Right ventricle myocardium superior (tissue), 1 donor: ENCODE measurements at regions of chr1 and their contacts with region 1.

Region 1: GRCh38 chr1:27044613-27045151 is 32.0 kb upstream of the TENT5B start:
- DNase-seq: peak; percentile 93
- ATAC-seq: peak; percentile 97

Region 2: GRCh38 chr1:26811057-26811456 is 233.6 kb before region 1 on chr1:
- intact Hi-C with region 1: no loop called
- DNase-seq: no peak
- ATAC-seq: no peak

Region 3: GRCh38 chr1:27097484-27097917 is 52.8 kb after region 1 on chr1:
- intact Hi-C with region 1: loop called (anchors 2 kb)
- DNase-seq: peak; percentile 85
- ATAC-seq: peak; percentile 71

Region 4: GRCh38 chr1:27284425-27285273 is 240.0 kb after region 1 on chr1:
- intact Hi-C with region 1: loop called (anchors 10 kb)
- DNase-seq: peak; percentile 90
- ATAC-seq: peak; percentile 89

Region 5: DNA sequence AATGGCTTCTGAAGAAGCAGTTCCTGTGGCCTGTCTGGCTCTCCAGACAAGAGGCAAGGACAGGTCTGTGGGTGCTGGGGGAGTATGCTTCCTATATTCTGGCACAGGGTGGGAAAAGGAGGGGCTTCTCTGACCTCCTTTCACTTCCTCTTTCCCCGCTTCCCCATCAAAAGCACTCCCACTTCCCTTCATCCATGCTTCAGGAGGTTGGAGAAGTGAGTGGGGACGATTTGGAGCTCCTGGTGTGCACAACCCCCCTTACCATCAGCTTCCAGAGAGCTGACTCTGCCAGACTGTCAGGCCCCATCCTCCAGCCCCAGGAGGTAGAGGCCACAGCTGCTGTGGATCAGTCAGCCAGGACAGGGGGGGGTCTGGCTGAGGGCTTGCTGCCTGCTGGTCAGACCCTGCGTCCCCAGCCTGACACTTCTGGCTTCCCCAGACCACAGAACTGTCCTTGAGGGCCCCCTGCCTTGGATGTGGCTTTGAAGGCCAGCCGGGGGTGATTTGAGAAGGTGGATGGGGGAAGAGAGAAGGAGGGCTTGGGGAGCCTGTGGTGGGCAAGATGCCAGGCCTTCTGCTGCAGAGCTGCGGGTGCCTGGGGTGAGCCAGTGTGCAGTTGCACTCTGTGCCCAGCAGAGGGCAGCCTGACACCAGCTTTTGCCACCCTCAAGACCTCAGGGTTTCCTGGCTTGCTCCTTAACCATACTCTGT is 255.8 kb after region 1 on chr1:
- intact Hi-C with region 1: no loop called
- DNase-seq: peak; percentile 91
- ATAC-seq: peak; percentile 86

Region 6: DNA sequence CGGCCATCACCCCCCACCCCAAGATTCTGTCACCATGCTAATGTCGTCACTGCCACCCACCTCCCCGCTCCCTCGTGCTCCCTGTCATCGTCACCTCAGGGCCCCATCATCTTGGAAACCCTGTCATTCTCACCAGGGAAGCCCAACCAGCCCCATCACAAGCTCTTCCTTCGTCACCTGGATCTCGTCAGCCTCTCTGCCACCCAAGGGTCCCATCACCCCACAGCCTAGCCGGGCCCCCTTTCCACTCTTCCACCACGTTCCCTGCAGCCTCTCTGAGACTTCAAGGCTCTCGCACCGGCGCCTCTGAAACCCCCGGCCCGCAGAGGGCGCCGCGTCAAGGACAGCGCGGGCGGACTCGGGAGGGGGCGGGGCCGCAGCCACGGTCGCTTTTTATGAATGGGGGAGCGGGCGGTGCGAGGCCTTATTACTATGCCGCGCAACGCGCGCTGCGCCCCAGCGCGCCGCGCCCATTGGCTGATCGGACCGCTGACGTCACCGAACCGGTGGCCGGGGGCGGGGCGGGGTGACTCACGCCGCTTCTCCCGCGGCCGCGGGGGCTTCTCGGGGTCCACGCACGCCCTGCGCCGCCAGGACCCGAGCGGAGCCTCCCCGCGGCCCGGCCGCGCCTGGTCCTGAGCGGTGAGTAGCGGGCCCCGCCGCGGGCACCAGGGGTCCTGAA is 347.6 kb after region 1 on chr1 and contains the start of gene GPR3:
- intact Hi-C with region 1: loop called (anchors 10 kb)
- DNase-seq: peak; percentile 96
- ATAC-seq: peak; percentile 92
- total RNA-seq, gene GPR3: 0.24 TPM